IMR-90 (cell line): ENCODE measurements at regions of chr1 and their contacts with region 1.

Region 1: GRCh38 chr1:52141513-52142219 is at the start of gene ZFYVE9:
- DNase-seq: peak; percentile 76
- ATAC-seq: peak; percentile 91
- H3K4me3 ChIP-seq: peak within 1 kb of the TSS; percentile 86
- H3K27ac ChIP-seq: peak within 1 kb of the TSS; percentile 84
- H3K4me1 ChIP-seq: peaks cover 4% of the 10 kb centered on the region
- H3K27me3 ChIP-seq: no peaks in the 10 kb centered on the region
- CTCF ChIP-seq: peak; percentile 94
- POLR2A ChIP-seq: no peak; the same call in 1 of the 2 replicates
- RAD21 ChIP-seq: peak; percentile 75
- total RNA-seq, gene ZFYVE9: 28.7 and 29.4 TPM in 2 replicates

Region 2: GRCh38 chr1:51877434-51878306 is 264.0 kb before region 1 on chr1:
- CTCF ChIA-PET with region 1: no interaction called
- POLR2A ChIA-PET with region 1: no interaction called
- dilution Hi-C with region 1: no loop called
- in situ Hi-C with region 1: no loop called
- intact Hi-C with region 1: no loop called
- DNase-seq: peak; percentile 42
- ATAC-seq: peak; percentile 6; the same call in 1 of the 2 replicates
- H3K4me3 ChIP-seq: peak overlapping the region; percentile 83
- H3K27ac ChIP-seq: peak overlapping the region; percentile 95
- H3K4me1 ChIP-seq: peaks cover 3% of the 10 kb centered on the region; the same call in 1 of the 2 replicates
- H3K27me3 ChIP-seq: no peaks in the 10 kb centered on the region
- CTCF ChIP-seq: no peak
- POLR2A ChIP-seq: no peak
- RAD21 ChIP-seq: no peak

Region 3: GRCh38 chr1:52195166-52195565 is 53.5 kb after region 1 on chr1:
- CTCF ChIA-PET with region 1: no interaction called
- POLR2A ChIA-PET with region 1: no interaction called
- dilution Hi-C with region 1: no loop called
- in situ Hi-C with region 1: no loop called
- intact Hi-C with region 1: loop called (anchors 2 kb)
- DNase-seq: peak; percentile 82
- ATAC-seq: peak; percentile 81
- H3K4me3 ChIP-seq: no peak overlapping the region
- H3K27ac ChIP-seq: no peak overlapping the region
- H3K4me1 ChIP-seq: peaks cover 2% of the 10 kb centered on the region; the same call in 1 of the 2 replicates
- H3K27me3 ChIP-seq: no peaks in the 10 kb centered on the region
- CTCF ChIP-seq: no peak
- POLR2A ChIP-seq: no peak
- RAD21 ChIP-seq: no peak

Region 4: DNA sequence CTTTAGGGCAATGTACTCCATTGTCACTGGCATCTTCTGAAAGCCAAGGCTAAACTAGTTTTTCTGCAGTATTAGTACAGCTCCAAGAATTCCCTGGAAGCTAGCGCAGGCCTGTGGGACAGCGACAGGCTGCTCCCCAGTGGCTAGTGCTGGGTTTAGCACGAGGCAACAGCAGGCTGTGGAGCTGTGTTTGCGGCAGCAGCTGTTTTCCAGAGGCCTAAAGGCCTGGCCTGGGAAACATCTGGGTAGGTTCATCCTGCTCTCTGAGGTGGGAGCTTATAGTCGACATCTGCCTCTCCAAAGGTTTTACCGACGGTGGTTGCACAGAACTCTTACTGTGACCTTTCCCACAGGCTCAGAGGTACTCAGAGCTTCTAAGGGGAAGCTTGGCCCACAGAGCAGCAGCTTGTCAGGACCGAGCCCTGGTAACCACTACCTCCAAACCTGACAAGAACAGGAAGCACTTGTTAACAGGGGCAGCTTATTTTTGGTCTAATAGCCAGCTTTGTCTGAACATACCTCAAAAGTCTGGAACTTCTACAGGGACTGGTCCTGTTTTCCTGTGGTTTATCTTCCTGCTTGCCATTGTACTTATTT is 207.1 kb after region 1 on chr1:
- CTCF ChIA-PET with region 1: no interaction called
- POLR2A ChIA-PET with region 1: no interaction called
- dilution Hi-C with region 1: no loop called
- in situ Hi-C with region 1: no loop called
- intact Hi-C with region 1: loop called (anchors 5 kb)
- DNase-seq: peak; percentile 44
- ATAC-seq: peak; percentile 86
- H3K4me3 ChIP-seq: no peak overlapping the region
- H3K27ac ChIP-seq: no peak overlapping the region
- H3K4me1 ChIP-seq: no peaks in the 10 kb centered on the region; the same call in 1 of the 2 replicates
- H3K27me3 ChIP-seq: no peaks in the 10 kb centered on the region
- CTCF ChIP-seq: peak; percentile 45
- POLR2A ChIP-seq: no peak
- RAD21 ChIP-seq: peak; percentile 57